A673 (cell line): ENCODE measurements at regions of chr21 and their contacts with region 1.

Region 1: DNA sequence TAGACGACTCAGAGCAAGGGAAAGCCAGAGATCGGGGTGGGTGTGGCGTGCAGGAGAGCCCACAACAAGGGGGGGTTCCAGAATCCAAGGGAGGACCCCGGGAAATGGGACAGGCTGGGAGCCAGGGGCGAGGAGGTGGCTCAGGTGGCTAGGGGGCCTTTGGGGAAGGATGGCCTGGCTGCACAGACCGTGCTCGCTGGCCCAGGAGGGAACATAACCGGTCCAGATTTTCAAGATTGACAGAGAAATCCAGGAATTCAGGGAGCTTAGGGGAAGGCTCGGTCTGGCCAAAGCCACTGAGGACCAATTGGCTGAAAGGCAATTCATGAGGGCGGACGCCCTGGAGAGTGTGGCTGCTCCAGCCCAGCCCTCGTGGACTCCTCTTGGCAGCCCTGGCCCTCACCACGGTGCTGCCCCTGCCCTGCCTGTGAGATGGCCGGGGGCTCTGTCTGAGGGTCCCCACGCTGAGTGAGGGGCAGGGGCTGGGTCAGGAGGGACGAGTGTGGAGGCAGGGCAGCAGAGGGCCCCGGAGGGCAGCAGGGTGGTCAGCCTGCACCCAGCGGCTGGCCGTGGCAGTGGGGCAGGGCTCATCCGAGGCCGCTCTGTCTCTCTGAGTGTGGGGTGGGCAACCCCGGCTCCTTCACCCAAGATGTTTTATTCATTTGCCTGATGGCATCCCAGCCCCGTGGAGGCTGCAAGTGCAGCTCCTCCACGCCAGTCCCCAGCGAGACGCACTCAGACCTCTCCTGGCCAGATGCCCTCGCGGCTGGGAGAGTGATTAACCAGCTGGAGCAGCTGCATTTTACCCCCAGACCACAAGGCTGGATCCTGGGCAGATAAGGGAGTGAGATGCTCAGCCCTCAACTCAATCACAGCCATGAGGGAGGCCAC is 5.6 kb upstream of the LRRC3 start:
- DNase-seq: no peak
- H3K4me3 ChIP-seq: no peak overlapping the region
- H3K27ac ChIP-seq: no peak overlapping the region
- H3K4me1 ChIP-seq: no peaks in the 10 kb centered on the region
- H3K27me3 ChIP-seq: peaks cover 36% of the 10 kb centered on the region
- CTCF ChIP-seq: no peak

Region 2: GRCh38 chr21:44502171-44502958 is 52.6 kb after region 1 on chr21:
- CTCF ChIA-PET with region 1: no interaction called
- POLR2A ChIA-PET with region 1: interaction called, 14 read pairs
- intact Hi-C with region 1: no loop called
- DNase-seq: no peak
- H3K4me3 ChIP-seq: no peak overlapping the region
- H3K27ac ChIP-seq: no peak overlapping the region
- H3K4me1 ChIP-seq: no peaks in the 10 kb centered on the region
- H3K27me3 ChIP-seq: no peaks in the 10 kb centered on the region
- CTCF ChIP-seq: no peak

Region 3: DNA sequence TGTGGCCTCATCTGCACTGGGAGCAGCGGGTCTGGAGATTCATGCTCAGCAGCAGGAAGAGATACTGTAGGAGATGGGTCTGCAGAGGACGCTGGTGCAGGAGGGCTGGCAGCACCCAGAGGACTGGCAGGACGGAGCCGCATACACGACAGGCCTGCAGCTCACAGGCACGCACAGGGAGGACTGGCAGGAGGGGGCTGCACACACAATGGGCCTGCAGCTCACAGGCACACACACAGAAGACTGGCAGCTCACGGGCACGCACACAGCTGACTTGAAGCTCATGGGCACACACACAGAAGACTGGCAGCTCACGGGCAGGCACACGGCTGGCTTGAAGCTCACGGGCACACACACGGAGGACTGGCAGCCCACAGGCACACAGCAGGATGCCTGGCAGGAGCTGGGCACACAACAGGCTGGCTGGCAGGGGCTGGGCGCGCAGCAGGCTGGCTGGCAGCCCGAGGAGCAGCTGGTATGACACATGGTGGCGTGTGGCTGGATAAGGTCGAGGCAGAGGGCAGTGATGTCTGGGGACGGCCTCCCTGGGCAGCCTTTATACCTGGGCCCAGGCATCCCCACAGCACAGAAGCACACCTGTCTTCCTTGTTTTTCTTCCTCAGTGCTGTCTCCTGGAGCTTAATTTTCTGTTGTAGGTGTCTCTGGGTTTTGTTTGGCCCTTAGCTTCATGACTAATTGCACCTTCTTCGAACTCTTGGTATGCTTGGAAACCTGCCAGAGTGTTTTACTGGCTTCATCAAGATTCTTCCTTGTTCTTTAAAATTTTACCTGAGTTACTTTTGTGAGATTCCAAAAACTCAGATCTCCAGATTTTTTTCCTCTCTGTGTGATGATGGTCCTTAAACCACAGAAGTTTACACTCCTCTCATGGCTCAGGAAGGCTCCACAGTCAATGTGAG is 216.9 kb after region 1 on chr21 and contains the start of gene KRTAP12-2:
- CTCF ChIA-PET with region 1: no interaction called
- POLR2A ChIA-PET with region 1: no interaction called
- intact Hi-C with region 1: no loop called
- DNase-seq: no peak
- H3K4me3 ChIP-seq: no peak within 1 kb of the TSS
- H3K27ac ChIP-seq: no peak within 1 kb of the TSS
- H3K4me1 ChIP-seq: no peaks in the 10 kb centered on the region
- H3K27me3 ChIP-seq: no peaks in the 10 kb centered on the region
- CTCF ChIP-seq: no peak
- total RNA-seq, gene KRTAP12-2: 1.6 and 1.8 TPM in 2 replicates

Region 4: GRCh38 chr21:44686000-44686781 is 236.5 kb after region 1 on chr21:
- CTCF ChIA-PET with region 1: no interaction called
- POLR2A ChIA-PET with region 1: no interaction called
- intact Hi-C with region 1: no loop called
- DNase-seq: peak; percentile 35
- H3K4me3 ChIP-seq: no peak overlapping the region
- H3K27ac ChIP-seq: peak overlapping the region; percentile 15
- H3K4me1 ChIP-seq: no peaks in the 10 kb centered on the region
- H3K27me3 ChIP-seq: no peaks in the 10 kb centered on the region
- CTCF ChIP-seq: no peak